ENCODE measurements at regions of chr12 and their contacts with region 1.

Region 1: GRCh38 chr12:8949342-8950220 is at the start of gene M6PR:
- DNase-seq: peak; percentile 92 to 97
- H3K4me3 ChIP-seq: peak within 1 kb of the TSS; percentile 93
- H3K27ac ChIP-seq: peak within 1 kb of the TSS; percentile 88
- H3K4me1 ChIP-seq: peaks cover 22% of the 10 kb centered on the region
- H3K27me3 ChIP-seq: no peaks in the 10 kb centered on the region
- CTCF ChIP-seq: no peak; the same call in 1 of the 2 replicates
- total RNA-seq, gene M6PR: 237 and 266 TPM in 2 replicates

Region 2: GRCh38 chr12:8697476-8698131 is 252.0 kb before region 1 on chr12 and contains the start of gene RIMKLB:
- CTCF ChIA-PET with region 1: no interaction called
- POLR2A ChIA-PET with region 1: interaction called, 3 read pairs
- intact Hi-C with region 1: loop called (anchors 5 kb)
- DNase-seq: peak in 1 of 2 experiments; percentile 82
- H3K4me3 ChIP-seq: peak within 1 kb of the TSS; percentile 92
- H3K27ac ChIP-seq: peak within 1 kb of the TSS; percentile 43
- H3K4me1 ChIP-seq: peaks cover 16% of the 10 kb centered on the region
- H3K27me3 ChIP-seq: no peaks in the 10 kb centered on the region
- CTCF ChIP-seq: no peak
- total RNA-seq, gene RIMKLB: 56.9 and 64.8 TPM in 2 replicates

Region 3: DNA sequence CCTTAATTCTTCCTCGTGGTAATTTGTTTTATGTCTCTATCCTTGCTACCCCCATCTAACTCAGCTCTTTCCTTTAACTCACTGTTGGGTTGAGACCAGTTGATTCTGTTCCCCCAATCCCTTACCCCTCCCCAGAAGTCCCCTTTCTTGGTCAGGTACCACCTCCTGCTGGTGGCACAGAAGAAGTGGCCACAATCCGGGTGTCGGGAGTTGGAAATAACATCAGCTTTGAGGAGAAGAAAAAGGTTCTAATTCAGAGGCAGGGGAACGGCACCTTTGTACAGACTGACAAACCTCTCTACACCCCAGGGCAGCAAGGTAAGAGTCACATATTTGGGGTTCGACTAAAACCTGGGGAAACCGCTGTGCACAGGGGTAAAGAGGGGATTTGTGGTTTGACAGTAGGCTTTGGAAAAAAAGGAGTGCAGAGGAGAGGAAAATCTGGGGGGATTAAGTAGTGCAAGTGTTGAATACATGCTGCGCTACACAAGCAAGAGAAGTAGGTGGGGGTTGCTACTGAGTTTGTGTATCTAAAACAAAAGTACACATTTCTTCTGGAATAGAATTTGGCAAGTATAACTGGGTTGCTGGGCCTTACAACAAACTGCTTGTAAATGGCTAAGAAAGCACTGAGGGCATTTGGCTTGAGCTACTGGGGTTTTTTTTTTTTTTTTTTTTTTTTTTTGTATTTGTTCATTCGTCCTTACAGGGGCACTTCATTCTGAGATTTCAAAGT is 125.8 kb before region 1 on chr12:
- CTCF ChIA-PET with region 1: no interaction called
- POLR2A ChIA-PET with region 1: no interaction called
- intact Hi-C with region 1: loop called (anchors 5 kb)
- DNase-seq: no peak
- H3K4me3 ChIP-seq: no peak overlapping the region
- H3K27ac ChIP-seq: no peak overlapping the region
- H3K4me1 ChIP-seq: peaks cover 18% of the 10 kb centered on the region
- H3K27me3 ChIP-seq: no peaks in the 10 kb centered on the region
- CTCF ChIP-seq: peak; percentile 46; the same call in 1 of the 2 replicates

Region 4: GRCh38 chr12:8834230-8834629 is 115.4 kb before region 1 on chr12:
- CTCF ChIA-PET with region 1: no interaction called
- POLR2A ChIA-PET with region 1: no interaction called
- intact Hi-C with region 1: no loop called
- DNase-seq: no peak
- H3K4me3 ChIP-seq: no peak overlapping the region
- H3K27ac ChIP-seq: no peak overlapping the region
- H3K4me1 ChIP-seq: no peaks in the 10 kb centered on the region
- H3K27me3 ChIP-seq: no peaks in the 10 kb centered on the region
- CTCF ChIP-seq: no peak

Region 5: DNA sequence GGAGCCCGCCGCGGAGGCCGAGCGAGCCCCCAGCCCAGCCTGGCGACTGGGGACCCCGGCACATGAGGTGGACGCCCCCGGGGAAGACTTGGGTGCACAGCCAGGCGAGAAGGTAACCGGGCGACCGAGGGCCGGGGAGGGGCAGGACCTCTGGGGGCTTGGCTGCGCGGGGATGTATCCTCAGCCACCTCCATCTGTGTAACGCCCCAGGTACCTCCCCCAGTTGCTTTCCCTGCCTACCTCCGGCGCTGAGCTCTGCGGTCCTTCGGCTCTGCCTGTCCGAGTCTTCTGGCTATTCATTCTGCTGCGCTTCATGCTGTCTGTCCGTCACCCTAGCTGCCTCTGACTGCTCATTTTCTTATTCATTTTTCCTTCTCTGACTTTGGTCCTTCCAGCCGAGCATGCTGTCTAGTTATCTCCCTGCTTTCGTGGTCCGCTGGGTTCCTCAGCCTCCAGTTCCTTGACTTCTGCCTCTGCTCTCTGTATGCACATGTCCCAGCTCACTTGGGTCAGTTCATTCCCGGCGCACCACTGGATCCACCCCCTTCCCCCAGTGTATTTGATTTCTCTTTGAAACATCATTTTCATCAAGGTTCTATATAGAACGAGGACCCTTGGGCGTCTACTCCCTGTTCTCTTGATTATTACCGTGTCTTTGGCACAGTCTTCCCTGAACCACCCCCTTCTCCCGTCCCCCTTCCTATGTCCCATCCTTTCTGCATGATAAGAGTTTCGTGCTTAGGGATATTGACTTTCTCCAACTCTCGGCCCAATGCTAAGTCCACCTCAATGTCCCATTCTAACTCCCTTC is 34.7 kb before region 1 on chr12:
- CTCF ChIA-PET with region 1: interaction called, 7 read pairs
- POLR2A ChIA-PET with region 1: interaction called, 6 read pairs
- intact Hi-C with region 1: loop called (anchors 1 kb)
- DNase-seq: peak; percentile 68 to 88
- H3K4me3 ChIP-seq: peak overlapping the region; percentile 93
- H3K27ac ChIP-seq: no peak overlapping the region
- H3K4me1 ChIP-seq: peaks cover 57% of the 10 kb centered on the region
- H3K27me3 ChIP-seq: no peaks in the 10 kb centered on the region
- CTCF ChIP-seq: no peak

Region 6: GRCh38 chr12:8991371-8992345 is 42.1 kb after region 1 on chr12:
- CTCF ChIA-PET with region 1: no interaction called
- POLR2A ChIA-PET with region 1: interaction called, 11 read pairs
- intact Hi-C with region 1: no loop called
- DNase-seq: no peak
- H3K4me3 ChIP-seq: no peak overlapping the region
- H3K27ac ChIP-seq: no peak overlapping the region
- H3K4me1 ChIP-seq: 0 out of 2 replicates have a peak, but pooled peaks cover 3% of the 10 kb centered on the region
- H3K27me3 ChIP-seq: no peaks in the 10 kb centered on the region
- CTCF ChIP-seq: no peak

Region 7: DNA sequence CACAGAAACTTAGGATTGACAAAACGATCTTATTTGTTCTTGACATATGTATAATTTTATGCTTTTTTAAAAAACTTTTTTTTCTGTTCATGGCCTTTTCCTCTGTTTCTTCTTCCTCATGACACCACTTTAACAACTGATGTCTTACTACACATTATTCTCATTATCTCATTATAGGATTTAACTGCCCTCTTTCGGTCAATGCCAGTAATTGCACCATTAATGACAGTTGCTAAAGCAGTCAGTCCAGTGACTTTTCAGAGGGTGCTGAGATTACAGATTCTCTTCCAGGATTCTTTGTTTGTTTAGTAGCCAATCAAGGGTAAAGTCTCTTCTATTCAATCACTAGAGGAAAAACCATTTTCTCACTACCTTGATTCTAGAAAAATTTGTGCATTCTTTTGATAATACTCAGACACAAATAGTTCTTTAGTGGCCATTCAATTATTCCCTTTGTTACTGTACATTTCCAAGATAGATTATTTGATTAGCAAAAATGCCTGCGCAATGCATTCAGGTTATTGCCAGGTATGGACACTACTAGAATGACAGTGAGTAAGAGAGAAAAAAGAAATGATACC is 89.9 kb after region 1 on chr12:
- CTCF ChIA-PET with region 1: interaction called, 7 read pairs
- POLR2A ChIA-PET with region 1: interaction called, 5 read pairs
- intact Hi-C with region 1: loop called (anchors 1 kb)
- DNase-seq: peak in 1 of 2 experiments; percentile 52
- H3K4me3 ChIP-seq: no peak overlapping the region
- H3K27ac ChIP-seq: no peak overlapping the region
- H3K4me1 ChIP-seq: no peaks in the 10 kb centered on the region
- H3K27me3 ChIP-seq: no peaks in the 10 kb centered on the region
- CTCF ChIP-seq: peak; percentile 85

Region 8: DNA sequence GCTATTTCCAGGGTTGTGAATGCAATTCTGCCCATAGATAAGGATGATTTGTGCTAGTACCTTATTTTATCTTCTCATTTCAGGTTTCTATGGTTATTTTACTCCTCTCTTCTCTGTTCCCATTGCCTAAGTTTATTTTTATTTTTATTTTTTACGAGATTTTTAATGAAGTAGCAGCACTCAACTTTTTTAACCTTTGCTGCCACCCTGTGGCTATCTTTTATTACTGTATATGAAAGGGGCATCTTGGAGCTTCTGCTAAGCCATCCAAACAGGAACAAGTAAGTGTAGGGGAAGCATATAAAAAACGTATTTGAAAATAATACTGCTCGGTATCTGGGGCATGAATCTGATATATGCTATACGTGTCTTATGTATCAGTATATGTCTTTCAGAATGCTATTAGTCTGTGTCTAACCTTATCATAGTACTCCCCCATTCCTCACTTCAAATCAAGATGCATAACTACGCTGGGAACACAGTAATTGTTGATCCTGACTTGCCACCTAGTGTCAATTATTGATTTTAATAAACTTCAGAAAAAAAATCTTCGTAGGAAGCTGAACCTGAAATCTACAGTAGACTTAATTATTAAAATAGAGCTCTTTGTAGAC is 100.0 kb after region 1 on chr12:
- CTCF ChIA-PET with region 1: interaction called, 11 read pairs
- POLR2A ChIA-PET with region 1: interaction called, 9 read pairs
- intact Hi-C with region 1: no loop called
- DNase-seq: peak; percentile 34 to 52
- H3K4me3 ChIP-seq: no peak overlapping the region
- H3K27ac ChIP-seq: no peak overlapping the region
- H3K4me1 ChIP-seq: no peaks in the 10 kb centered on the region
- H3K27me3 ChIP-seq: peaks cover 13% of the 10 kb centered on the region
- CTCF ChIP-seq: peak; percentile 80

Region 9: GRCh38 chr12:9073076-9073475 is 123.5 kb after region 1 on chr12:
- CTCF ChIA-PET with region 1: no interaction called
- POLR2A ChIA-PET with region 1: no interaction called
- intact Hi-C with region 1: no loop called
- DNase-seq: no peak
- H3K4me3 ChIP-seq: no peak overlapping the region
- H3K27ac ChIP-seq: no peak overlapping the region
- H3K4me1 ChIP-seq: no peaks in the 10 kb centered on the region
- H3K27me3 ChIP-seq: no peaks in the 10 kb centered on the region; the same call in 1 of the 2 replicates
- CTCF ChIP-seq: no peak